ENCODE measurements at regions of chr1 and their contacts with region 1.

Region 1: DNA sequence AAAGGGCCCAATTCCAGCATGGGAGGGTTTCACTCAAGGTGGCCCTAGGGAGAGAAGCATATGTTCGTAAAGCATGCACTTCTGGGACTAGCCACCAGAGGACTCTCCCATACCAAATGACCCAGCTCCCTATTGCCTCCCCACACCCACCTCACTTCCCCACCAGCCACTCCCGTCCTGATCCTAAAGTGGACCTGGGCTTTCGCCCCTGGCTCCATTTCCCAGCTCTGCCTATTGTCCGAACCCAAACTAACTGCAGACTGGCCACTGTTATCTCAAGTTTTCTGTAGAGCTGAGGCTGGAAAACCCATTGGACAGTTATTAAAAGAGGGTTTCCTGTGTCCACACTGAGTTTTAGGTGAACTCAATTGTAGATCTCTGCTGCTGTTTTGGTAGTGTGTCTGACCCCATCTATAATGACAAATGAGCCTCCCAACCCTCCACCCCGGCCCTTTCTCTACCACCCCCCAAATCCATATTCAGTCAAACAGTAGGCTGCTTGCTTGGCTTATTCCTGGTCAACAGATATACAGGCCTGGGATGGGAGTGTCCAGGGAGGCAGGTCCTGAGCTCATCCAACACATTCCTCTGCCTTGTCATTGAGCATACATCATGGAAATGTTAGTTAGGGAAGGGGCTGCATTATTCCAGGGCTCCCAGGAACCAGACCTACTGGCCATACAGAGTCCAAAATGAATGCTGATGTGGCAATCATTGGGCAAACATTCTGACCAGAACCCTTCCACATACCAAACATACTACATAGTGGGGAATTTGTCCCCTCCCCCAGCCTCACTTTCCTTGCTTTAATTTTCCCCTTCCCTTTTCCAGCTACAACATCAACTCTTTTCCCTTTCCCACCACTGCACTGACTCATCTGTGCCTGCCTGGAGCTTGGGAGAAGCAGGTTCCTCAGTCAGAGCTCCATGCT is 59.2 kb downstream of the ABCA4 start:
- DNase-seq: peak; percentile 58 to 72 (median 69)
- H3K4me3 ChIP-seq: no peak overlapping the region
- H3K27ac ChIP-seq: no peak overlapping the region
- H3K4me1 ChIP-seq: peaks cover 0 to 11% (median 1%) of the 10 kb centered on the region in 4 experiments
- H3K27me3 ChIP-seq: peaks cover 0 to 22% (median 5%) of the 10 kb centered on the region in 5 experiments

Region 2: DNA sequence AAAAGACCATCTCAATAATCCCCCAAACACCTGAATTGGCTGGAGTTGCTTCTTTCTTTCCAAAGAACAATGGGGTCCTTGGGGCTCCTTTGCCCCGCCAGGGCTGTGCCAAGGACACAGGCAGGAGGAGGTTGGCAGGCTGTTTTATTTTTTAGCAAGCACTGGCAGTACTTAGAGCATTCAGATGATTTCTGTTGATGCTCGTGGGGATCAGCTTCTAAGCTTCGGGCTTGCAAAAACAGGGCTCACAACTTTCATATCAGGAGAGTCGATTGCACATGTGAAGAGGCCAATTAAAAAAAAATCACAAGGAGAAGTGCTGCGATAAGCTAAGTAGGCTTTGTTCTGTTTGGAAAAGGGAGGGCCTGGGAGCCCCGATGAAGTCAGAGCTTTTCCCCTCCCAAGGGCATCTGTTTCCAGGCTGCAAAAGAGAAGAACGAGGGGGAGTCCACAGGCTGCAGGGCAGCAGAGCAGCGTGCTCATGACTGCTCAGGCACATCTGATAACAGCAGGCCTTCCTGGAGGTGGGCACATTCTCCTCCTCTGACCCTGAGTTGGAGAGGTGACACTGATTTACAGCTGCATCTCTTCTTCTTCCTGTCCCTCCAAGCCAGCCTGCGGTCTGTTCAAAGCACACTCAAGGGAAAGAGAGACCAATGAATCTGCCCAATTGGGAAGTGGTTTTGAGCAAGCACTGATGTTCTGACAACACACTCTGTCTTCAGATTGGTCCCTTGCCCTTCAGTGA is 352.9 kb before region 1 on chr1:
- CTCF ChIA-PET with region 1: no interaction called
- POLR2A ChIA-PET with region 1: no interaction called
- DNase-seq: peak; percentile 22 to 68 (median 63)
- H3K4me3 ChIP-seq: peak overlapping the region in 1 of 7 experiments; percentile 1
- H3K27ac ChIP-seq: no peak overlapping the region
- H3K4me1 ChIP-seq: peaks cover 0 to 24% (median 13%) of the 10 kb centered on the region in 4 experiments
- H3K27me3 ChIP-seq: peaks cover 0 to 5% (median 2%) of the 10 kb centered on the region in 5 experiments

Region 3: DNA sequence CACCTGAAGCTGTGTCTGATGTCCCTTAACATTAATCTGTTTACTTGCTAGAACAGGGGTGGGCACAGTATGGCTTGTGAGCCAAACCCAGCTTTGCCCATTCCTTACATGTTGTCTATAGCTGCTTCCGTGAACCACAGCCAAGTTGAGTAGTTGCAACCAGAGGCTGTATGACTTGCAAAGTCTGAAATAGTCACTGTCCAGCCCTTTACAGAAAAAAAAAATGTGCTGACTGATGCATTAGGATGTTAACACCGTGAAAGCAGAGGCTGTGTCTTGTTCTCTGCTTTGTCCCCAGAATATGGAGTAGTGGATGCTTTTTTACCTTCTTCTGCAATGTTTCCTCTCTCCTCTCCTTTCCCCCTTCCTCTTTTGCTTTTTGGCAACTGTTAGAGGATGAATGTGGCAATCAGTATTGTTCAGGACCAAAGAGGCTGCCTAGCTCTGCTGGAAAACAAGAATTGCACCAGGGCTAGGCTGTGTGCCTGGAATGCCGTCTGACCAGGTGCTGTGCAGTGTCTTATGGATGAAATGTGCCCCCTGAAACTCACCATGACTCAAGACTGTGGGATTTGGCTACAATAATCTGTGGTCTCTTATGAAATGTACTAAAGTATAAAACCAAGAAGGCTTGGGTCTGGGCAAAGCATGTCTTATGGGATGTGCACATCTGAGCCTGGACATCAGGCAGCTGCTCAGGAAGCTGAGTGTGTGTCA is 73.0 kb before region 1 on chr1:
- CTCF ChIA-PET with region 1: no interaction called
- POLR2A ChIA-PET with region 1: no interaction called
- DNase-seq: peak in 2 of 3 donors; percentile 6 to 11
- H3K4me3 ChIP-seq: no peak overlapping the region
- H3K27ac ChIP-seq: no peak overlapping the region
- H3K4me1 ChIP-seq: no peaks in the 10 kb centered on the region
- H3K27me3 ChIP-seq: peaks cover 0 to 6% (median 0%) of the 10 kb centered on the region in 5 experiments

Region 4: GRCh38 chr1:94025383-94026340 is 36.1 kb before region 1 on chr1:
- CTCF ChIA-PET with region 1: interaction called, 10 read pairs
- POLR2A ChIA-PET with region 1: no interaction called
- DNase-seq: peak; percentile 64 to 77 (median 74)
- H3K4me3 ChIP-seq: no peak overlapping the region
- H3K27ac ChIP-seq: no peak overlapping the region
- H3K4me1 ChIP-seq: peaks cover 0 to 6% (median 2%) of the 10 kb centered on the region in 4 experiments
- H3K27me3 ChIP-seq: peaks cover 0 to 6% (median 0%) of the 10 kb centered on the region in 5 experiments

Region 5: DNA sequence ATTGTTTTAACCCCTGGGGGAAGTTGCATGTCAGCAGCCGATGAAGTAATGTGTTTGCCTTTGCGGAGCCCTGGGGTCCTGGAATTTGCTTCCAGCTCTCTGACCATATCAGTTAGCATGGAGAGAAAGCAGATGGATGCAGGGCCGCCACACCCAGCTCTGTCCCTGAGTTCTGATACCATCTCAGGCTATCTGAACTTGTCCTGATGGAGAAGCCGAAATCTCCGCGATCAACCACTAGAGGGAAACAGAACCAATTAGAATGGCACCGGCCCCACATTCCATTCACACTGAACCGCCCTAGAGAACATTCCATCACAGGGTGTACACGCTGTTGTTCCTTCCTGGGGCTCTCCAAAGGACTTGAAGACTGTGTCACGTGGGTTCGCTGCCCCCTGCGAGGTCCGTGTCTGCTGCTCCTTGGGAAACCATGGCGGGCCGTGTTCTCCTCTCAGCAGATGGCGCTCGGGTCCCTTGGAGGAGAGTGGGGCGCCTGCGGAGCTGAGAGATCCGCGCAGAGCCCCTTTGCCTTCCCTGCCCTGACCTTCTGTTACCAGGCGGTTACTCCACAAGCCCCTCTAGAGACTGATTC is 16.2 kb before region 1 on chr1:
- CTCF ChIA-PET with region 1: interaction called, 92 read pairs
- POLR2A ChIA-PET with region 1: no interaction called
- DNase-seq: peak; percentile 58 to 70 (median 68)
- H3K4me3 ChIP-seq: peak overlapping the region in 6 of 7 experiments; percentile 16 to 73 (median 48)
- H3K27ac ChIP-seq: no peak overlapping the region
- H3K4me1 ChIP-seq: peaks cover 0 to 16% (median 8%) of the 10 kb centered on the region in 4 experiments
- H3K27me3 ChIP-seq: peaks cover 0 to 5% (median 0%) of the 10 kb centered on the region in 5 experiments

Region 6: DNA sequence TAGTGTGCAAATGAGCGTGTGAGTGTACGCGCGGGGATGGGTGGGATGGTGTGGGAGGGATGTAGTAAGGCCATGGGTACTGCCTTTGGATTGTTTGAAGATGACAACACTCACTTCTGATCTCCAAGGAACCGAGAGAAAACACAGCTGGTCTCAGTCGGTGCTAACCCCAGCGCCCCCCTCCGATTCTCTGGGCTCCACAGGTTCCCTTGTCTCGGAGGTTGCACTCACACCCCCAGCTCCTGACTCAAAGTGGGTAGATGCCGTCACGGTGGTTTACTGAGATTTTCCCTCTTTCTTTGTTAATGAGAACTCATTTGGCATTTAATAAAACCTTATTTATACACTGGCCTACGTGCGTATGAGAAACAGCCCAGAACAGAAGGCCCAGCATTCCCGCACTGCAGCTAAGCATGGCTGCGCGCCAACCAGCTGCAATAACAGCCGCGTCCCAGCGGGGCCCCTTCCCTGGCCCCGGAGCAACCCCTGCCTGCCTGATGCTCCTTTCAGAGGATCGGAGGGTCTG is 33.4 kb after region 1 on chr1:
- CTCF ChIA-PET with region 1: interaction called, 68 read pairs
- POLR2A ChIA-PET with region 1: interaction called, 3 read pairs
- DNase-seq: no peak
- H3K4me3 ChIP-seq: peak overlapping the region in 2 of 7 experiments; percentile 40 to 42
- H3K27ac ChIP-seq: no peak overlapping the region
- H3K4me1 ChIP-seq: peaks cover 32 to 57% (median 52%) of the 10 kb centered on the region in 4 experiments
- H3K27me3 ChIP-seq: peaks cover 0 to 9% (median 0%) of the 10 kb centered on the region in 5 experiments

Region 7: GRCh38 chr1:94118021-94118870 is 56.5 kb after region 1 on chr1:
- CTCF ChIA-PET with region 1: interaction called, 13 read pairs
- POLR2A ChIA-PET with region 1: no interaction called
- DNase-seq: no peak
- H3K4me3 ChIP-seq: no peak overlapping the region
- H3K27ac ChIP-seq: no peak overlapping the region
- H3K4me1 ChIP-seq: no peaks in the 10 kb centered on the region
- H3K27me3 ChIP-seq: peaks cover 0 to 16% (median 6%) of the 10 kb centered on the region in 5 experiments

Region 8: DNA sequence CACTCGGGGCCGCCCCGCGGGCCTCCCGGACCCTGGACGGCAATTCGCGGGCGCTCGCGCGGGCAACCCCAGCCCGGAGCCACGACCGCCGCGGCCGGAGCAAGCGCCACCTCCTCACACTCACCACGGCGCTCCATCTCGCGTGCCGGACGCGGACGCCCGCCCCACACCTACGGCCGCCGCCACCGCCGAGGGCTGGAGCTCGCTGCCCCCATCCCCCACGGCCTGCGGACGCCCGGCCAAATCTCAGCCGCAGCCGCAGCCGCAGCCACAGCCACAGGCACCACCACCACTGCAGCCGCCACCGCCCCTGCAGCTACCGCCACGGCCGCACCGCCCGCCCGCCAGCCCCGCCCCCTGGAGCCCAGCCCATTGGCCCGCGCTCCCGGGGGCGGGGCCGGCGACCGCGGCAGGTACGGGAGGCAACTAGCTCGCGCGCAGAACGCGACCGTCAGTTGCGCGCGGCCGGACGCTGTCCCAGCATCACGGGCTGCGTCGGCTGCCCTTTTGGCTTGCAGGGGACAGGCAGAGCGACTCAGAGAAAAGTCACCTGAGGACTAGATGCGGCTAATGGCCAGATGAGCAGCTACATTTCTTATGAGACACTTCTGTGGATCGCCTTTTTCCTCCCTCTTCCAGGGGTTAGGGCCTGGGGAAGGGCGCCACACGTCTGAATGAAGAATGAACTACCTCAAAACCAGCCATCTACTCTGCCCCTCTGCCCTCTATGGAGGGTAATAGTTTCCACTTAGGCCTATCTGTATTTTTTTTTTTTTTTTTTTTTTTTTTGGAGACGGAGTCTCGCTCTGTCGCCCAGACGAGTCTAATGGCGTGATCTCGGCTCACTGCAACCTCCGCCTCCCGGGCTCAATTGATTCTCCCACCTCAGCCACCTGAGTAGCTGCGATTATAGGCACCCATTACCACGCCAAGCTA is 175.8 kb after region 1 on chr1 and contains the start of gene ARHGAP29:
- CTCF ChIA-PET with region 1: interaction called, 204 read pairs
- POLR2A ChIA-PET with region 1: no interaction called
- DNase-seq: peak; percentile 54 to 76 (median 66)
- H3K4me3 ChIP-seq: peak within 1 kb of the TSS; percentile 4 to 72 (median 57)
- H3K27ac ChIP-seq: no peak within 1 kb of the TSS
- H3K4me1 ChIP-seq: peaks cover 9 to 20% (median 14%) of the 10 kb centered on the region in 4 experiments
- H3K27me3 ChIP-seq: peaks cover 13 to 77% (median 39%) of the 10 kb centered on the region in 5 experiments

Region 9: GRCh38 chr1:94335950-94336349 is 274.2 kb after region 1 on chr1:
- CTCF ChIA-PET with region 1: interaction called, 214 read pairs
- POLR2A ChIA-PET with region 1: no interaction called
- DNase-seq: peak; percentile 81 to 86 (median 85)
- H3K4me3 ChIP-seq: no peak overlapping the region
- H3K27ac ChIP-seq: no peak overlapping the region
- H3K4me1 ChIP-seq: peaks cover 5 to 20% (median 12%) of the 10 kb centered on the region in 4 experiments
- H3K27me3 ChIP-seq: peaks cover 0 to 3% (median 0%) of the 10 kb centered on the region in 5 experiments

Measured in common myeloid progenitor, CD34-positive (primary cell).